ENCODE measurements at regions of chr3 and their contacts with region 1.

Region 1: DNA sequence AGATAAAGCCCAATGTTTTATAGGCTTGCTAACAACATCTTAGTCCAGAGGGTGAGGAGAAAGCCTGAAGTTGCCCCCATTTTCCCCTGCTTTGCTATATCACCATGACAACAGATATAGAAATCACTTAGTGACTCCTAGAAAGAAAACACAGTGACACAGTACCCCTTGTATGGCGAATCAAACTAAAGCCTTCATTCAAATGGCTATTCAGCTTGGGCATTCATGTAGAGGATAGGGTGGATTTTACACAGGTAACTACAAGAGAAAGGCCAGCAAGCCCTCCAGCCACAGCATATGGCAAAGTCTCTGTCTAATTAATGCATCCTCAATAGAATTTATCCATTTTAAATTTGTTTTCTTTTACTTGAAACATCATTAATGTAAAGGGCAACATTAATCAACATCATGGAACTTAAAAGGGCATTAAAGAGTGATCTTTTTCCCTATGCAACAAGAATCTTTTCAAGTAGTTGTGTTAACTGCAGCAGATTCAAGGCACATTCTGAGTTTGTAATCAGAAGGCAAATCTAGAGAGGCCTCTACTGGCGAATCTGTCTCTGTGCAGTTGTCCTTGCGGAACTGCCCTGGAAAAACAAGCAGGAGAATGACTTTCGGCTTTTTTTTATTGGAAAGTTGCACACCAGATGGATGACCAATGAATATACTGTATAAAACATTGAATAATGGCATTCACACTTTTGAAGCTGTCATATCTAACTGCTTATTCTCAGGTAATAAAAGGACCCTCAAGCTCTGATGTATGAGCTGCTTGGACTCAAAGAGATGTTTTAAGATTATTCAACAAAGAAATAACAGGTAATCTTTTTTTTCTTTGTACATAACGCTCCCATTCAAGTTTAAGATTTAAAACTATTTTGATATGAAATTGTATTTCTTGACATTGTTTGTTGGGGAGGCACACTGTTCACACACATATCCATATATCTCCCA is 621.7 kb upstream of the AGTR1 start:
- DNase-seq: peak; percentile 33
- H3K4me3 ChIP-seq: no peak overlapping the region
- H3K27ac ChIP-seq: no peak overlapping the region
- H3K4me1 ChIP-seq: no peaks in the 10 kb centered on the region
- H3K27me3 ChIP-seq: no peaks in the 10 kb centered on the region
- CTCF ChIP-seq: peak; percentile 60 to 81

Region 2: DNA sequence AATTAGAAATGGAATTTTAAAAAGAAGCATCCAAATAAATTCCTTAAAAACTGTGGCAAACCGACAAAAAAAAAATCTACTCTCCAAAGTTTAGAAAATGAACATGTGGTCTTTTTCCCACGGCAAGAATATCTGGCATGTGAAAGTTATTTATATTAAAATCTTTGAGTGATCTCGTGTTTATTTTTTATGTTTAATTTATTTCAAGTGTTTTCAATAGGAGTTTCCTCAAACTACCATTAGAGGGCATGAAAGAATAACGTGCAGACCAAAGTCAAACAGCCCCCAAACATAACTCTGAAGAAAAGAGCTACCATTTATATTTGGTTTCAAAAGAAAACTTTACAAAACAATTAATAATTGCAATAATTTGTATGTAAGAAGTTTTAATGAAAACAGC is 956.1 kb before region 1 on chr3:
- CTCF ChIA-PET with region 1: no interaction called
- dilution Hi-C with region 1: no loop called
- in situ Hi-C with region 1: no loop called
- intact Hi-C with region 1: loop called (anchors 5 kb)
- DNase-seq: no peak
- H3K4me3 ChIP-seq: no peak overlapping the region
- H3K27ac ChIP-seq: no peak overlapping the region
- H3K4me1 ChIP-seq: no peaks in the 10 kb centered on the region
- H3K27me3 ChIP-seq: peaks cover 4% of the 10 kb centered on the region
- CTCF ChIP-seq: peak; percentile 26 to 53

Region 3: DNA sequence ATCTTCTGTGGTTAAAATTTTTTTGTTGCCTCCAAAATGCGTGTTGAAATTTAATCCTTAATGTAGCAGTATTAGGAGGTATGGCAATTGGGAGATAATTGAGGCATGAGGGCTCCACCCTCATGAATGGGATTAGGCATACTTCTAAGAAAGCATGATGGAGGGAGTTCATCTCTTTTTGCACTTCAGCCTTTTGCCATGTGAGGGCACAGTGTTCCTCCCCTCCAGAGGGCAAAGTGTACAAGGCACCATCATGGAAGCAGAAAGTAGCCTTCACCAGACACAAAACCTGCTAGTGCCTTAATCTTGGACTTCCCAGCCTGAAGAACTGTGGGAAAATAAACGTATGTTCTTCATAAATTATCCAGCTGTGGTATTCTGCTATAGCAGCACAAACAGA is 237.4 kb before region 1 on chr3:
- CTCF ChIA-PET with region 1: no interaction called
- dilution Hi-C with region 1: no loop called
- in situ Hi-C with region 1: no loop called
- intact Hi-C with region 1: loop called (anchors 1 kb)
- DNase-seq: peak; percentile 18
- H3K4me3 ChIP-seq: no peak overlapping the region
- H3K27ac ChIP-seq: no peak overlapping the region
- H3K4me1 ChIP-seq: no peaks in the 10 kb centered on the region
- H3K27me3 ChIP-seq: no peaks in the 10 kb centered on the region
- CTCF ChIP-seq: peak; percentile 25 to 63

Region 4: DNA sequence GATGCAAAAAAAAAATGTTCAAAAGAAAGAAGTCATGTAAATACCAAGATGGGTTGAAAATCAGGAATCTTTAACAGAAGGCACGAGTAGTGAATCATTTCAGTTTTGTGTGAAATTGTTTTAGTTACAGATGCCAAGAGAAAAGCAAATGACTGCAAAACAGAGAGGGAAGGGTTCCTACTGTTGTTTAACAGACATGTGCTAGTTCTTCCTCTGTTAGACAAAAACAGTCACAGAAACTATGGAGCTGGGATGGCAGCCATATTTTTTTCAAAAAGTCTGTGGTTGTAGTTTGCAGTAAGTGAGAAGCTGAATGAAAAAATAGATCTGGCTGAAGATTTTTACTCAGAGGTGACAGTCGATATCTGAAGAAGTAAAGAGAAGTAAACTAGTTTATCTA is 155.0 kb before region 1 on chr3:
- CTCF ChIA-PET with region 1: no interaction called
- dilution Hi-C with region 1: no loop called
- in situ Hi-C with region 1: no loop called
- intact Hi-C with region 1: no loop called
- DNase-seq: no peak
- H3K4me3 ChIP-seq: no peak overlapping the region
- H3K27ac ChIP-seq: no peak overlapping the region
- H3K4me1 ChIP-seq: peaks cover 5% of the 10 kb centered on the region
- H3K27me3 ChIP-seq: no peaks in the 10 kb centered on the region
- CTCF ChIP-seq: no peak

Region 5: GRCh38 chr3:148366743-148367410 is 290.8 kb after region 1 on chr3:
- CTCF ChIA-PET with region 1: no interaction called
- dilution Hi-C with region 1: no loop called
- in situ Hi-C with region 1: no loop called
- intact Hi-C with region 1: loop called (anchors 2 kb)
- DNase-seq: no peak
- H3K4me3 ChIP-seq: no peak overlapping the region
- H3K27ac ChIP-seq: no peak overlapping the region
- H3K4me1 ChIP-seq: no peaks in the 10 kb centered on the region
- H3K27me3 ChIP-seq: peaks cover 1% of the 10 kb centered on the region
- CTCF ChIP-seq: peak in 1 of 2 donors; percentile 21

Measured in mammary epithelial cell (primary cell).